MCF 10A (cell line): ENCODE measurements at regions of chr5 and their contacts with region 1.

Region 1: DNA sequence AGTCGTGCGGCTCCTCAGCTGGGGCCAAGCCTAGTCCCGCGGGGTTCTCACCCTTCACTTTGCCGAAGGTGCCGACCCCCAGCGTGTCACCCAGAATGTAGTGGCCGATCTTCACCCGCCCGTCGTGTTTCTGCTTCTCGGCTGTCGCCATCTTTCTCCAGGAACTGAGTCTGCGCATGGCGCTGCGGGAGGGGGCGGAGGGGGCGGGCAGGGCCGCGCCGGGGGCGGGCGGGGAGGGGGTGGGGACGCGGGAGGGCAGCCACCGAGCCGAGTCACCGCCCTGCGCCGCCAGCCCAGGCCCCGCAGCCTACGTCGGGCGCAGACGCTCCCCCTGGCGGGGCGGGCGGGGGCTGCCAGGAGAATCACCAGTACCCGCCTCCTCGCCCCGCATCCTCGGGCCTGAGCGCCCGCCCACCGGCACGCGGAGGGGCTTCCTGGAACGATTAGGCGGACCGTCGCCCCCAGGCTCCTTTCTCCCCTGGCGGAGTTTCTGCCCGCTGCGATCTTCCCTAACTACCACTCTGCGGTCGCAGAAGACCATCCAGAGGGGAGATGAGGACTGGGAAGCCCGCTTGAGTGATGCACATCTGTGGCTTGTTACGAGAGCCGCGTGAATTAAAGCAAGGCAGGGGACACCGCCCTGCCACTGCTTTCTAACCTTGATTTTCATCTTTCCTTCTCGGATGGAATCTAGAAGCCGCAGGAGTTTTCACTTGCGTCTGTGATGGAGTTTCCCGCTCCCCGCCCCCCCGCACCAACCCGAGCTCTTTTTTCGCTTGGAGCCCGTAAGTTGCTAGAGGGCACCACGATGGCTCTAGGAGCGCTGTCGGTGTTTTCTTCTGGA is at the start of gene PRKAA1:
- DNase-seq: peak; percentile 85
- H3K4me3 Mint-ChIP-seq: peak within 1 kb of the TSS; percentile 79
- H3K27ac Mint-ChIP-seq: peak within 1 kb of the TSS; percentile 25
- H3K4me1 Mint-ChIP-seq: peaks cover 5% of the 10 kb centered on the region
- H3K27me3 Mint-ChIP-seq: no peaks in the 10 kb centered on the region
- CTCF ChIP-seq: peak; percentile 61
- total RNA-seq, gene PRKAA1: 58.1 and 62.7 TPM in 2 replicates

Region 2: GRCh38 chr5:40755407-40756365 is 42.5 kb before region 1 on chr5 and contains the start of gene TTC33:
- CTCF ChIA-PET with region 1: interaction called, 3 read pairs
- POLR2A ChIA-PET with region 1: interaction called, 11 read pairs
- intact Hi-C with region 1: loop called (anchors 1 kb)
- DNase-seq: peak; percentile 95
- H3K4me3 Mint-ChIP-seq: no peak within 1 kb of the TSS
- H3K27ac Mint-ChIP-seq: no peak within 1 kb of the TSS
- H3K4me1 Mint-ChIP-seq: no peaks in the 10 kb centered on the region
- H3K27me3 Mint-ChIP-seq: no peaks in the 10 kb centered on the region
- CTCF ChIP-seq: peak; percentile 39
- total RNA-seq, gene TTC33: 13.3 and 13.7 TPM in 2 replicates

Region 3: GRCh38 chr5:40828690-40829661 is 30.7 kb after region 1 on chr5:
- CTCF ChIA-PET with region 1: interaction called, 4 read pairs
- POLR2A ChIA-PET with region 1: interaction called, 12 read pairs
- intact Hi-C with region 1: loop called (anchors 1 kb)
- DNase-seq: no peak
- H3K4me3 Mint-ChIP-seq: no peak overlapping the region
- H3K27ac Mint-ChIP-seq: peak overlapping the region; percentile 3
- H3K4me1 Mint-ChIP-seq: peaks cover 24% of the 10 kb centered on the region
- H3K27me3 Mint-ChIP-seq: no peaks in the 10 kb centered on the region
- CTCF ChIP-seq: no peak

Region 4: DNA sequence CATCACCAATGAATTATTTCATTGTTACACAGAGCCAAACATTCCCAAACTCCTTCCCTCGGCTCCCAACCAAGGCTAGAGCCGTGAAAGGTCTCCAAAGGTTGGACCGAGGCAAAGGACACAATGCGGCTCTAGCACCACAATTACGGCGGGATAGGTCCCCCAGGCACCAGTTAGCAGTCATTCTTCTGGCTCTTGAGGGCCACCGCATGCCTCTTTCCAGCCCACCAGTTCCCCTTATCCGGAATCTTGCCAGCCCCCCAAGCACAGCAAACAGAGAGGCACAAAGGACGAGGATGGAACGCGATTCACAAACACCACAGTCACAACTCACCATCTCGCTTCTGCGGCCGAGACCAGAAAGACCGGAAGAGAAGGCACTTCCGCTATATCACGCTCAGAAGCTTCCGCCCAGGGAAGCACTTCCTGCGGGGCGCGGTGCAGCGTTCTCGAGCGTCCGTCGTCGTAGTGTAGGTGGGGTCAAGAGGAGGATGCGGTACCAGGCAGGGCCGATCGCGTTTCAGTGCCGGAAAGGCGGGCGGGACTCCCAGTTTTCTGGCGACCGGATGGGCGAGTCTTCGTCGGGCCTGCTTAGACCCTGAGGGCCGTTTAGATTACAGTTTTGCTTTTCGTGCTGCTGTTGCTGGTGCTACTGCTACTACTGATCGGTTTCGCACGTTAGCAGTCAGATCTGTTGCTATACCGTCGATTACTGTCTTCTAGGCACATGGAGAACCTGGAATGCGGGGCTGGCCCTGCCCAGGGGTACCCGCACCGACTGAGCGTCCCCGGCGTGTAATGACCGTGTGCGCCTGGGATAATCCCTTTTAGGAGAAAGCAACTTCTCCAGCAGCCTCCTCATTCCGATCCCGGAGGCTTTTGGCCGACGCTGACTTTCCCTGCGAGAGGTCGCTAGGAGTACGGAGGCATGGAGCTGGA is 36.9 kb after region 1 on chr5 and contains the start of gene RPL37:
- CTCF ChIA-PET with region 1: interaction called, 4 read pairs
- POLR2A ChIA-PET with region 1: interaction called, 7 read pairs
- intact Hi-C with region 1: loop called (anchors 1 kb)
- DNase-seq: peak; percentile 97
- H3K4me3 Mint-ChIP-seq: peak within 1 kb of the TSS; percentile 98
- H3K27ac Mint-ChIP-seq: peak within 1 kb of the TSS; percentile 98
- H3K4me1 Mint-ChIP-seq: peaks cover 17% of the 10 kb centered on the region
- H3K27me3 Mint-ChIP-seq: no peaks in the 10 kb centered on the region
- CTCF ChIP-seq: no peak
- total RNA-seq, gene RPL37: 2,063 and 2,180 TPM in 2 replicates

Region 5: GRCh38 chr5:40841068-40841805 is 43.0 kb after region 1 on chr5 and contains the start of gene CARD6:
- CTCF ChIA-PET with region 1: interaction called, 7 read pairs
- POLR2A ChIA-PET with region 1: interaction called, 13 read pairs
- intact Hi-C with region 1: no loop called
- DNase-seq: peak; percentile 55
- H3K4me3 Mint-ChIP-seq: peak within 1 kb of the TSS; percentile 80
- H3K27ac Mint-ChIP-seq: peak within 1 kb of the TSS; percentile 94
- H3K4me1 Mint-ChIP-seq: peaks cover 15% of the 10 kb centered on the region
- H3K27me3 Mint-ChIP-seq: no peaks in the 10 kb centered on the region
- CTCF ChIP-seq: no peak
- total RNA-seq, gene CARD6: 5.6 and 6.6 TPM in 2 replicates